Ovary (tissue), 10 donors: ENCODE measurements at regions of chr2 and their contacts with region 1.

Region 1: DNA sequence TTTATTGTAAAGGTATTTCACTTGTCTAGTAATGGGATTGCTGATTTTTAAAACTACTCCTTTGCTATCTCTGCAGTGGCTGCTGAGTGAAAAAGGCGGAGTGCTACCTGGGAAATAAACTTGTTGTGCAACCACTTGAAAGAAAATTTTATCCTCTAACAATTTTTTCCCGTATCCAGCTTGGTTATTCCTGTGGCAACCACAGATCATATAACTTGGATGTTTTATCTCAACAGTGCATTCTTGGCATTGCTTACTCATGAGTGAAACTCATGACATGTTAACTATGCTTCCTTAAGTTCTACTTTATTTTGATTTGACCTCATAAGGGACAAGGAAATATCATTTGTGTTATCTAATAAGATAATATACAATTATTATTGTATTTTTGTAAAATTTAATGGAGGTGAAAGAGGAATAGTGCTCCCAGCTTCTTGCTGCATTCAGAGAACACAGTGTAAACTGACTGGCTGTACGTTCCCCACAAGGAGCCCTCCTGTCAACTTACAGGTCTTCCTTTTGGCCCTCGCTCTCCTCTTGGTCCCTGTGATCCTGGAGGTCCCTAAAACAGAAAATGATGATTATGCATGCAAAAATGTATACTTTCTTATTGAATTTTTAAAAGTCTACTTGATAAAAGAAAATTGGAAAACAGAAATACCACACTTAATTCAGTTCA is 82.7 kb downstream of the COL5A2 start:
- DNase-seq: no peak
- H3K4me3 ChIP-seq: no peak overlapping the region
- H3K27ac ChIP-seq: no peak overlapping the region
- H3K4me1 ChIP-seq: no peaks in the 10 kb centered on the region
- H3K27me3 ChIP-seq: no peaks in the 10 kb centered on the region
- CTCF ChIP-seq: no peak
- EP300 ChIP-seq: no peak
- POLR2A ChIP-seq: no peak

Region 2: DNA sequence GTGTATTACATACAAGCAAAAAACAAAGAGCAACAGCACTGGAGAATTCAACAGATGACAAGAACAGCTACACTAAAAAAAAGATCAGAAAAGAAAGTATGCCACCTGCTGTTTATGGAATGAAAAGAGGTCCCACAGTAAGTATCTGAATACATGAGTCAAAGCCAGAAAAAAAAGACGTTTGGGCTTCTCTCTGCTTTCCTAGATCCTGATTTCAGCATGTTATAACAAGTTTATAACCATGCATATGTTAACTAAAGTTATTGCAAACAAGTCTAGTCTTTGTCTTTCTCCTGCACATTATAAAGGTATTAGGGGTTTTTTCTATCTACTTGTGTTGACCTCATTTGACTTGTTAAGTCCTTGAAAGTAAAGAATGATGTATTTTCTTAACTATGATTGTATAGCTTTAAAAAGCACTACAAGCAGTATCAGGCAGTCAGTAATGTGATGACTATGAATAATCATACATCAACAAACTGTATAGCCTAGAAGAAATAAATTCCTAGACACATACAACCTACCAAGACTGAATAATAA is 191.1 kb after region 1 on chr2:
- intact Hi-C with region 1: loop called in 1 of 4 experiments (anchors 10 kb)
- DNase-seq: no peak
- H3K4me3 ChIP-seq: no peak overlapping the region
- H3K27ac ChIP-seq: no peak overlapping the region
- H3K4me1 ChIP-seq: no peaks in the 10 kb centered on the region
- H3K27me3 ChIP-seq: no peaks in the 10 kb centered on the region
- CTCF ChIP-seq: peak; percentile 21 to 58 (median 49)
- EP300 ChIP-seq: no peak
- POLR2A ChIP-seq: no peak

Region 3: GRCh38 chr2:189412330-189412953 is 315.5 kb after region 1 on chr2:
- intact Hi-C with region 1: loop called in 3 of 4 experiments (anchors 10 kb)
- DNase-seq: peak in 4 of 5 donors; percentile 38 to 59 (median 47)
- H3K4me3 ChIP-seq: no peak overlapping the region
- H3K27ac ChIP-seq: peak overlapping the region in 1 of 2 donors; percentile 48
- H3K4me1 ChIP-seq: no peaks in the 10 kb centered on the region
- H3K27me3 ChIP-seq: no peaks in the 10 kb centered on the region
- CTCF ChIP-seq: peak; percentile 53 to 90 (median 86)
- EP300 ChIP-seq: no peak
- POLR2A ChIP-seq: no peak